CD8-positive, alpha-beta T cell (primary cell): ENCODE measurements at regions of chr1 and their contacts with region 1.

Region 1: GRCh38 chr1:116817582-116818064 is 63.4 kb downstream of the CD2 start:
- DNase-seq: peak; percentile 43 to 89 (median 76)
- ATAC-seq: peak; percentile 71
- H3K4me3 ChIP-seq: no peak overlapping the region
- H3K4me3 Mint-ChIP-seq: peak overlapping the region; percentile 60
- H3K27ac ChIP-seq: no peak overlapping the region
- H3K27ac Mint-ChIP-seq: peak overlapping the region; percentile 70
- H3K4me1 ChIP-seq: peaks cover 19% of the 10 kb centered on the region
- H3K4me1 Mint-ChIP-seq: peaks cover 31% of the 10 kb centered on the region
- H3K27me3 ChIP-seq: no peaks in the 10 kb centered on the region
- H3K27me3 Mint-ChIP-seq: no peaks in the 10 kb centered on the region
- CTCF ChIP-seq: peak; percentile 80

Region 2: DNA sequence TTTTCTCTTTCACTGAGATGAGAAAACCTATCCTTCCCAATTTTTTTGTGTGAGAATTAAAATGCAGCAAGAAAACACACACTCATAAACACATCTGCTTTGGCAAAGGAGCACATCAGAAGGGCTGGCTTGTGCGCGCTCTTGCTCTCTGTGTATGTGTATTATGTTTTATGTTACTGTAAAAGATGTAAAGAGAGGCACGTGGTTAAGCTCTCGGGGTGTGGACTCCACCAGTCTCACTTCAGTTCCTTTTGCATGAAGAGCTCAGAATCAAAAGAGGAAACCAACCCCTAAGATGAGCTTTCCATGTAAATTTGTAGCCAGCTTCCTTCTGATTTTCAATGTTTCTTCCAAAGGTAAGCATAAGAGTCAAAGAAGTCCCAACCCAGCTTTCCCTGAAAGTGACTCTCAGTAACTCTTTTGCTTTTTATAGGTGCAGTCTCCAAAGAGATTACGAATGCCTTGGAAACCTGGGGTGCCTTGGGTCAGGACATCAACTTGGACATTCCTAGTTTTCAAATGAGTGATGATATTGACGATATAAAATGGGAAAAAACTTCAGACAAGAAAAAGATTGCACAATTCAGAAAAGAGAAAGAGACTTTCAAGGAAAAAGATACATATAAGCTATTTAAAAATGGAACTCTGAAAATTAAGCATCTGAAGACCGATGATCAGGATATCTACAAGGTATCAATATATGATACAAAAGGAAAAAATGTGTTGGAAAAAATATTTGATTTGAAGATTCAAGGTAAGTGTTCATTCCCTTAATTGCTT is 63.2 kb before region 1 on chr1 and contains the start of gene CD2:
- CTCF ChIA-PET with region 1: interaction called, 13 read pairs
- POLR2A ChIA-PET with region 1: interaction called, 6 read pairs
- intact Hi-C with region 1: no loop called
- DNase-seq: peak in 6 of 9 experiments; percentile 43 to 80 (median 60)
- ATAC-seq: peak; percentile 83
- H3K4me3 ChIP-seq: peak within 1 kb of the TSS; percentile 71 to 84
- H3K4me3 Mint-ChIP-seq: peak within 1 kb of the TSS; percentile 93
- H3K27ac ChIP-seq: peak within 1 kb of the TSS; percentile 70 to 87
- H3K27ac Mint-ChIP-seq: peak within 1 kb of the TSS; percentile 99
- H3K4me1 ChIP-seq: peaks cover 23% of the 10 kb centered on the region
- H3K4me1 Mint-ChIP-seq: peaks cover 40% of the 10 kb centered on the region
- H3K27me3 ChIP-seq: no peaks in the 10 kb centered on the region
- H3K27me3 Mint-ChIP-seq: no peaks in the 10 kb centered on the region
- CTCF ChIP-seq: no peak
- total RNA-seq, gene CD2: 97.8 to 102 TPM

Region 3: GRCh38 chr1:116769561-116769977 is 48.1 kb before region 1 on chr1:
- CTCF ChIA-PET with region 1: interaction called, 126 read pairs
- POLR2A ChIA-PET with region 1: interaction called, 22 read pairs
- intact Hi-C with region 1: loop called (anchors 1 to 2 kb)
- DNase-seq: peak in 8 of 9 experiments; percentile 44 to 94 (median 76)
- ATAC-seq: peak; percentile 75
- H3K4me3 ChIP-seq: peak overlapping the region in 1 of 2 experiments; percentile 14
- H3K4me3 Mint-ChIP-seq: peak overlapping the region; percentile 55
- H3K27ac ChIP-seq: peak overlapping the region; percentile 42 to 87
- H3K27ac Mint-ChIP-seq: peak overlapping the region; percentile 96
- H3K4me1 ChIP-seq: peaks cover 83% of the 10 kb centered on the region
- H3K4me1 Mint-ChIP-seq: peaks cover 86% of the 10 kb centered on the region
- H3K27me3 ChIP-seq: no peaks in the 10 kb centered on the region
- H3K27me3 Mint-ChIP-seq: no peaks in the 10 kb centered on the region
- CTCF ChIP-seq: no peak

Region 4: DNA sequence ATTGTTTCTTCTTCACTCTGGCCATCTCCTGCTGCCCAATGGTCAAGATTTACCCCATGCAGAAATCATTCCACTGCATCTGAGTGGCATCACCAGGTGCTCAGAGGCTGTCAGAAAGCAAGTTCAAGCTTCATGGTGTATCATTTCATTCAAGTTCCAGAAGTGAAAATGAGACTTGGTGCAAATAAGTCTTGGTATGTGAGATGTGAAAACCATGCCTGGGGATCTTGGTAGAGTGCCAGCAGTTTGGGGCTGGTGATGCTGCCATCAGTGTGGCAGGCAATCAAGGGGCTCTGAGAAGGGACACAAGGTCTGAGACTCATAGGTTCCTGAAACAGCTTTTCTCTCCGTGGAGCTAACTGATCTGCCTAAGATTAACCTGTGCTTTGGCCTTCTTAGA is 11.4 kb before region 1 on chr1:
- CTCF ChIA-PET with region 1: interaction called, 10 read pairs
- POLR2A ChIA-PET with region 1: no interaction called
- intact Hi-C with region 1: loop called in 1 of 2 experiments (anchors 2 kb)
- DNase-seq: peak in 7 of 9 experiments; percentile 37 to 85 (median 62)
- ATAC-seq: peak; percentile 37
- H3K4me3 ChIP-seq: peak overlapping the region in 1 of 2 experiments; percentile 47
- H3K4me3 Mint-ChIP-seq: peak overlapping the region; percentile 71
- H3K27ac ChIP-seq: peak overlapping the region in 1 of 2 experiments; percentile 87
- H3K27ac Mint-ChIP-seq: peak overlapping the region; percentile 94
- H3K4me1 ChIP-seq: peaks cover 52% of the 10 kb centered on the region
- H3K4me1 Mint-ChIP-seq: peaks cover 80% of the 10 kb centered on the region
- H3K27me3 ChIP-seq: no peaks in the 10 kb centered on the region
- H3K27me3 Mint-ChIP-seq: no peaks in the 10 kb centered on the region
- CTCF ChIP-seq: no peak

Region 5: DNA sequence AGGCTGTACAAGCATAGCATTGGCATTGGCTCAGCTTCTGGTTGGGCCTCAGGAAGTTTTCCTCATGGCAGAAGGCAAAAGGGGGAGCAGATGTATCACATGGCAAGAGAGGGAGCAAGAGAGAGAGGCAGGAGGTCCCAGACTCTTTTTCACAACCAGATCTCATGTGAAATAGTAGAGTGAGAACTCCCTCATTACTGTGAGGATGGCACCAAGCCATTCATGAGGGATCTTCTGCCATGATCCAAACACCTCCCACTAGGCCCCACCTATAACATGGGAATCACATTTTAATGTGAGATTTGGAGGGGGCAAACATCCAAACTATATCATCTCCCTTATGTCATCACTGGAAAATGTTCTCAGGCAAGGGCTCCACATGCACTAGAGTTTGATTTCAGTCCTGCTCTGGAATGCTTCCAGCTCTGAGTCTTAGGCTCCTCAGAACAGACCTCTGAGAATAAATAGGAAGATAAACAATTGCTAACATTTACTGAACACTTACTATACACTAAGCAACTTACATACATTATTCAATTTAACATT is 432.5 kb after region 1 on chr1:
- CTCF ChIA-PET with region 1: no interaction called
- POLR2A ChIA-PET with region 1: no interaction called
- intact Hi-C with region 1: no loop called
- DNase-seq: no peak
- ATAC-seq: no peak
- H3K4me3 ChIP-seq: no peak overlapping the region
- H3K4me3 Mint-ChIP-seq: no peak overlapping the region
- H3K27ac ChIP-seq: no peak overlapping the region
- H3K27ac Mint-ChIP-seq: no peak overlapping the region
- H3K4me1 ChIP-seq: no peaks in the 10 kb centered on the region
- H3K4me1 Mint-ChIP-seq: no peaks in the 10 kb centered on the region
- H3K27me3 ChIP-seq: peaks cover 0 to 2% of the 10 kb centered on the region in 2 experiments
- H3K27me3 Mint-ChIP-seq: peaks cover 2% of the 10 kb centered on the region
- CTCF ChIP-seq: no peak

Region 6: DNA sequence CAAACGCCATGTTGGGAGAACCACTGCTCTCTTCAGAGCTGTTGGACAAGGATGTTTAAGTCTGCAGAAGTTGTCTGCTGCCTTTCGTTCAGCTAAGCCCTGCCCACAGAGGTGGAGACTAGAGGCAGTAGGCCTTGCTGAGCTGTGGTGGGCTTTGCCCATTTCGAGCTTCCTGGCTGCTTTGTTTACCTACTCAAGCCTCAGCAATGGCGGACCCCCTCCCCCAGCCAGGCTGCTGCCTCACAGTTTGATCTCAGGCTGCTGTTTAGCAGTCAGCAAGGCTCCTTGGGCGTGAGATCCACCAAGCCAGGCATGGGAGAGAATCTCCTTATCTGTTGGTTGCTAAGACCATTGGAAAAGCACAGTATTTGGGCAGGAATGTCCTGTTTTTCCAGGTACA is 1186.7 kb after region 1 on chr1:
- CTCF ChIA-PET with region 1: no interaction called
- POLR2A ChIA-PET with region 1: no interaction called
- intact Hi-C with region 1: no loop called
- DNase-seq: no peak
- ATAC-seq: no peak
- H3K4me3 ChIP-seq: no peak overlapping the region
- H3K4me3 Mint-ChIP-seq: no peak overlapping the region
- H3K27ac ChIP-seq: no peak overlapping the region
- H3K27ac Mint-ChIP-seq: no peak overlapping the region
- H3K4me1 ChIP-seq: no peaks in the 10 kb centered on the region
- H3K4me1 Mint-ChIP-seq: no peaks in the 10 kb centered on the region
- H3K27me3 ChIP-seq: no peaks in the 10 kb centered on the region
- H3K27me3 Mint-ChIP-seq: peaks cover 16% of the 10 kb centered on the region
- CTCF ChIP-seq: no peak